AG04449 (cell line): ENCODE measurements at regions of chr7 and their contacts with region 1.

Region 1: GRCh38 chr7:131688738-131689661 is 132.6 kb upstream of the PODXL start:
- DNase-seq: no peak
- H3K4me3 ChIP-seq: no peak overlapping the region
- CTCF ChIP-seq: peak; percentile 92

Region 2: GRCh38 chr7:131699323-131699722 is 10.3 kb after region 1 on chr7:
- CTCF ChIA-PET with region 1: interaction called, 64 read pairs
- POLR2A ChIA-PET with region 1: no interaction called
- DNase-seq: no peak
- H3K4me3 ChIP-seq: no peak overlapping the region
- CTCF ChIP-seq: no peak

Region 3: DNA sequence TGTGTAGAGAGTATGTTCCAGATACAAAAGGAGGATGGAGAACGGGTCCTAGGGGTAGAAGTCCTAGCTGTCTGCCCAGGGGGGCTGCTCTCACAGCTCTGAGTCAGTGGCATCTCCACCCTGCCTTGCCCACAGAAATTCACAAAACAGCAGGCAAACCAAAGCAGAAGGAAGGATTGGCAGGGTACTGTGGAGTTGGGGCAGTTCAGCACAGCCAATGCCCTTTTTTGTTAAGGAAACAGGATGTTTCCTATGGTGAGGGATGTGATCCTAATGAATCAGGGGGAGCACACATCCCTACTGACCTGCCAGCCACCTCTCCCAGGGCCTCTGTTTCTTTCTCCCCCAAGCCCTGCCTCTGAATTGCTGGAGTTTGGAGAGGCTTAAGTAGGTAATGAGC is 429.6 kb after region 1 on chr7:
- CTCF ChIA-PET with region 1: no interaction called
- POLR2A ChIA-PET with region 1: no interaction called
- DNase-seq: no peak
- H3K4me3 ChIP-seq: no peak overlapping the region
- CTCF ChIP-seq: no peak